Spleen (tissue), 13 donors: ENCODE measurements at regions of chr12 and their contacts with region 1.

Region 1: GRCh38 chr12:31406345-31406744 is 80.4 kb upstream of the SINHCAF start:
- DNase-seq: no peak
- H3K4me3 ChIP-seq: no peak overlapping the region
- H3K27ac ChIP-seq: peak overlapping the region in 5 of 8 donors; percentile 15 to 60 (median 39)
- H3K4me1 ChIP-seq: peaks cover 0 to 37% (median 15%) of the 10 kb centered on the region in 6 donors
- H3K27me3 ChIP-seq: no peaks in the 10 kb centered on the region
- CTCF ChIP-seq: no peak
- POLR2A ChIP-seq: no peak

Region 2: GRCh38 chr12:31234955-31235867 is 171.1 kb before region 1 on chr12:
- intact Hi-C with region 1: no loop called
- DNase-seq: no peak
- H3K4me3 ChIP-seq: no peak overlapping the region
- H3K27ac ChIP-seq: no peak overlapping the region
- H3K4me1 ChIP-seq: peaks cover 0 to 10% (median 0%) of the 10 kb centered on the region in 6 donors
- H3K27me3 ChIP-seq: peaks cover 0 to 69% (median 3%) of the 10 kb centered on the region in 7 donors
- CTCF ChIP-seq: peak in 9 of 11 experiments; percentile 18 to 71 (median 50)
- POLR2A ChIP-seq: no peak

Region 3: GRCh38 chr12:31631784-31632183 is 225.4 kb after region 1 on chr12:
- intact Hi-C with region 1: loop called (anchors 2 kb)
- DNase-seq: no peak
- H3K4me3 ChIP-seq: no peak overlapping the region
- H3K27ac ChIP-seq: no peak overlapping the region
- H3K4me1 ChIP-seq: peaks cover 0 to 32% (median 8%) of the 10 kb centered on the region in 6 donors
- H3K27me3 ChIP-seq: no peaks in the 10 kb centered on the region
- CTCF ChIP-seq: no peak
- POLR2A ChIP-seq: no peak